Activated CD4-positive, alpha-beta memory T cell treated with anti-CD3 and anti-CD28 coated beads, Interleukin-2, amount 10 ng/mL, durations not matched to agents 7 days and 5 days (primary cell): ENCODE measurements at regions of chr10 and their contacts with region 1.

Region 1: GRCh38 chr10:102394079-102394800 is 1.3 kb upstream of the NFKB2 start:
- DNase-seq: peak; percentile 98
- H3K4me3 Mint-ChIP-seq: peak overlapping the region; percentile 84
- H3K27ac Mint-ChIP-seq: peak overlapping the region; percentile 93
- H3K4me1 Mint-ChIP-seq: peaks cover 41% of the 10 kb centered on the region
- H3K27me3 Mint-ChIP-seq: no peaks in the 10 kb centered on the region

Region 2: GRCh38 chr10:101797403-101798059 is 596.7 kb before region 1 on chr10:
- CTCF ChIA-PET with region 1: no interaction called
- POLR2A ChIA-PET with region 1: no interaction called
- DNase-seq: no peak
- H3K4me3 Mint-ChIP-seq: no peak overlapping the region
- H3K27ac Mint-ChIP-seq: no peak overlapping the region
- H3K4me1 Mint-ChIP-seq: peaks cover 9% of the 10 kb centered on the region
- H3K27me3 Mint-ChIP-seq: no peaks in the 10 kb centered on the region

Region 3: GRCh38 chr10:102167861-102168260 is 226.4 kb before region 1 on chr10:
- CTCF ChIA-PET with region 1: interaction called, 15 read pairs
- POLR2A ChIA-PET with region 1: interaction called, 6 read pairs
- DNase-seq: no peak
- H3K4me3 Mint-ChIP-seq: no peak overlapping the region
- H3K27ac Mint-ChIP-seq: no peak overlapping the region
- H3K4me1 Mint-ChIP-seq: peaks cover 23% of the 10 kb centered on the region
- H3K27me3 Mint-ChIP-seq: peaks cover 4% of the 10 kb centered on the region

Region 4: GRCh38 chr10:102334101-102334500 is 60.1 kb before region 1 on chr10:
- CTCF ChIA-PET with region 1: no interaction called
- POLR2A ChIA-PET with region 1: no interaction called
- DNase-seq: no peak
- H3K4me3 Mint-ChIP-seq: no peak overlapping the region
- H3K27ac Mint-ChIP-seq: no peak overlapping the region
- H3K4me1 Mint-ChIP-seq: peaks cover 10% of the 10 kb centered on the region
- H3K27me3 Mint-ChIP-seq: no peaks in the 10 kb centered on the region

Region 5: GRCh38 chr10:102375250-102375649 is 19.0 kb before region 1 on chr10:
- CTCF ChIA-PET with region 1: interaction called, 5 read pairs
- POLR2A ChIA-PET with region 1: interaction called, 10 read pairs
- DNase-seq: no peak
- H3K4me3 Mint-ChIP-seq: no peak overlapping the region
- H3K27ac Mint-ChIP-seq: no peak overlapping the region
- H3K4me1 Mint-ChIP-seq: no peaks in the 10 kb centered on the region
- H3K27me3 Mint-ChIP-seq: no peaks in the 10 kb centered on the region

Region 6: DNA sequence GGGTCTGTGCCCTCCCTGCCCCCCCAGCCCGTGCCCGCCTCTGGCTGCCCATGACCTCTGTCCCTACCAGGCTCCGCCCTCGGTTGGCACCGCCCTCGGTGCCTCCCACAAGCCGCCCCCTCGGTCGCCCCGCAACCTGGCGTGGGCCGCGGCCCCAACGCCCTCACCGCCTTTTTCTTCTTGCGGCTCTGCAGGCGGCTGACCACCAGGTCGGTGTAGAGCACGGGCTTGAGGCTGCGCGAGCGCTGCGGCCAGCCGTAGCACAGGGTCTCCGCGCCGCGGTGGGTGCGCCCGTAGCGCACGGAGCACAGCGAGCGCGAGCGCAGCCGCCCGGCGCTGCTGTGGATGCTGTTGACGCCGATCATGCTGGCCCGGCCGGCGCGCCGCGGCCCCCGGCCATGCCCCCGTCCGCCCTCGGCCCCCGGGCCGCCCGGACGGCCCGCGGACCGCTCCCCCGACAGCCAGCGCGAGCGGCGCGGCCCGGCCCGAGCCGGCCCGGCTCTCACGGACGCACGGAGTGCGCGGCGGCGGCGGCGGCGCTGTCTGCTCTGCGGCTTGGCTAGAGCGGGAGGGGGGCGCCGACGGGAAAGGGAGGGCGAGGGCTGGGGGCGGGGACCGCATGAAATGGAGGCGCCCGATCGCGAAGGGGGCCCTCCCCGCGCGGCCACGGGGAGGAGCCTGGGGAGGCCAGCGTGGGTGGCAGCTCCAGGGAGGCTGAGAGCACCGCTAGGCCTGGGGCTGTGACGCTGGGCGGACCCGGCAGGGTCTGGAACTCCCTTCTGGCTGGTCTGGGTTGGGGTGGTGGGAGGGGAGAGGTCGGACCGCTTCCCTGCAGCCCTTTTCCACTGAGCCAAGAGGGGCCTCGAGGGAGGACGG is 14.7 kb after region 1 on chr10:
- CTCF ChIA-PET with region 1: interaction called, 11 read pairs
- POLR2A ChIA-PET with region 1: interaction called, 14 read pairs
- DNase-seq: peak; percentile 49
- H3K4me3 Mint-ChIP-seq: peak overlapping the region; percentile 58
- H3K27ac Mint-ChIP-seq: no peak overlapping the region
- H3K4me1 Mint-ChIP-seq: peaks cover 29% of the 10 kb centered on the region
- H3K27me3 Mint-ChIP-seq: peaks cover 40% of the 10 kb centered on the region

Region 7: DNA sequence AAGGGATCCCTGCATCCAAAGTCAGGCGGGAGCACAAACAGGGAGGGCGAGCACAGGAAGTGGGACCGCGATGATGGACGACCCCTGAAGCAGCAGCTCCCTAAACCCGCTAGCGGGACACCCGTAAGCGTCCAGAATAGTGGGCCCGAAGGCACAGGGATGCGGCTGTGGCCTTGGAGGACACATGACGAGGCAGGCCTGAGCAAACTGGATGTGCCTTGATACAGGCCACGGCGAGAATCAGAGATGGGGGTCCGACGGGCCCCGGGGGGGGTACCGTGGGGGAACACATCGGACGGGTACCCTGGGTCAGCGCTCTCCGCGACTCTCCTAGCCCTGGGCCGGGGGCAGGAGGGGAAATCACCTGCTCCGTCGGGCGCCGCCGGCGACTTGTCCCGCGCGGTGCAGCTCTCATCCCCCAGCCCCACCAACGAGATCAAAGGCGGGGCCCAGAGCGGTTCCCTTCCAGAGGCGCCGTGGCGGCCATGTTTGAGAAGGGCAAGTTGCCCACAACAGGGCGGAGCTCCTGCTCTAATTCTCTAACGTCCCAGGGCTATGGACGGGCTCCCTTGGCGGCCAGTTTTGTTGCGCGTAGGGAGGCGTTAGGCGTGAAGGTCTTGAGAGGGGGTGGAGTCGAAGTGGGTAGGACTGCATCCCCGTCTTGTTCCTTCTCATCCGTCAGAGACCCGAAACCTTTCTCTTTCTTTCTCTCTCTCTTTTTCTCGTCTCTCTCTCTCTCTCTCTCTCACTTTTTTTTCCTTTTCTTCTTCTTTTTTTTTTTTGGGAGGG is 38.1 kb after region 1 on chr10 and contains the start of gene CUEDC2:
- CTCF ChIA-PET with region 1: interaction called, 5 read pairs
- POLR2A ChIA-PET with region 1: interaction called, 17 read pairs
- DNase-seq: peak; percentile 98
- H3K4me3 Mint-ChIP-seq: peak within 1 kb of the TSS; percentile 88
- H3K27ac Mint-ChIP-seq: peak within 1 kb of the TSS; percentile 82
- H3K4me1 Mint-ChIP-seq: peaks cover 55% of the 10 kb centered on the region
- H3K27me3 Mint-ChIP-seq: no peaks in the 10 kb centered on the region
- total RNA-seq, gene CUEDC2: 60.9 to 64.5 TPM

Region 8: GRCh38 chr10:102480396-102480795 is 86.2 kb after region 1 on chr10:
- CTCF ChIA-PET with region 1: interaction called, 14 read pairs
- POLR2A ChIA-PET with region 1: interaction called, 6 read pairs
- DNase-seq: no peak
- H3K4me3 Mint-ChIP-seq: no peak overlapping the region
- H3K27ac Mint-ChIP-seq: no peak overlapping the region
- H3K4me1 Mint-ChIP-seq: peaks cover 4% of the 10 kb centered on the region
- H3K27me3 Mint-ChIP-seq: no peaks in the 10 kb centered on the region

Region 9: DNA sequence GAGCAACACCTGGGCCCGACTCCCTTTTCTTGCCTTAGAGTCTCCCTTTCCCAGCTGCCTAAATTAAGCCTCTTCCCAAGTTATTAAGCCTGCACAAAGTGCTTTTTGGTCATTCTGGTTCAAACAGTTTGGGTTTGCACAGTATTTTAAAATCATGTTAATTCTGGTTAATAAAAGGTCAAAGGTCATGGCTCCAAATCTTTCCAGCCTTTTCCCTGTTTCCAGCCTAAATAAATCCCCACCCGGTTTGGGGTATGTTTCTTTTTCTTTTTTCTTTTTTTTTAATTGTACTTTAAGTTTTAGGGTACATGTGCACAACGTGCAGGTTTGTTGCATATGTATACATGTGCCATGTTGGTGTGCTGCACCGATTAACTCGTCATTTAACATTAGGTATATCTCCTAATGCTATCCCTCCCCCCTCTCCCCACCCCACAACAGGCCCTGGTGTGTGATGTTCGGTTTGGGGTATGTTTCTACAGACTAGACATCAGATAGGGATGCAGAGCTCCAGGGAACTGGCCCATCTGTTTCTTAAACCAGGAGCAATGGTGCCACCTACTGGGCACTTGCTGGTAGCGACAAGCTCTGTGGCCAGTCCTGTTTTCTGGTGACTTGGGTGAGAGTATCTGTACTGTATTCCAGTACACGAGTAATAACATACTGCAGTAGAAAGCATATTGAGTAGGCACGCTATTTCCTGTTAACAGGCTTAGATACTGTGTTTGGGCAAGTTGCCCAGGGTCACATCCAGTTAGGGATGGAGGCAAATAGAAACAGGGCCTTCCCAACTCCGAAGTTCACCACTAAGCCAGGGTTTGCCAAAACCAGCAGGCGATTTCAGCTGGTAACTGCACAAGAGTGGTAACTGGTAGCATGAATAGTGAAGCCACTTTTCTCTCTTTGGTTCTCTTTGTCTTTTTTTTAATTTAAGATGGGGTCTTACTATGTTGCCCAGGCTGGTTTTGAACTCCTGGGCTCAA is 189.5 kb after region 1 on chr10:
- CTCF ChIA-PET with region 1: interaction called, 13 read pairs
- POLR2A ChIA-PET with region 1: interaction called, 5 read pairs
- DNase-seq: peak; percentile 85
- H3K4me3 Mint-ChIP-seq: no peak overlapping the region
- H3K27ac Mint-ChIP-seq: no peak overlapping the region
- H3K4me1 Mint-ChIP-seq: peaks cover 18% of the 10 kb centered on the region
- H3K27me3 Mint-ChIP-seq: no peaks in the 10 kb centered on the region